ENCODE measurements at regions of chr13 and their contacts with region 1.

Region 1: GRCh38 chr13:25375727-25376358 is 4.1 kb downstream of the ATP8A2 start:
- DNase-seq: peak; percentile 22
- H3K4me3 ChIP-seq: no peak overlapping the region
- H3K27ac ChIP-seq: no peak overlapping the region
- H3K4me1 ChIP-seq: no peaks in the 10 kb centered on the region
- H3K27me3 ChIP-seq: peaks cover 34% of the 10 kb centered on the region
- CTCF ChIP-seq: peak; percentile 48

Region 2: GRCh38 chr13:25085125-25085742 is 290.6 kb before region 1 on chr13:
- intact Hi-C with region 1: loop called (anchors 10 kb)
- DNase-seq: peak; percentile 32
- H3K4me3 ChIP-seq: no peak overlapping the region
- H3K27ac ChIP-seq: no peak overlapping the region
- H3K4me1 ChIP-seq: no peaks in the 10 kb centered on the region
- H3K27me3 ChIP-seq: no peaks in the 10 kb centered on the region
- CTCF ChIP-seq: peak; percentile 36

Region 3: GRCh38 chr13:25232937-25233515 is 142.8 kb before region 1 on chr13:
- intact Hi-C with region 1: loop called (anchors 5 kb)
- DNase-seq: no peak
- H3K4me3 ChIP-seq: no peak overlapping the region
- H3K27ac ChIP-seq: no peak overlapping the region
- H3K4me1 ChIP-seq: no peaks in the 10 kb centered on the region
- H3K27me3 ChIP-seq: no peaks in the 10 kb centered on the region
- CTCF ChIP-seq: peak; percentile 48

Measured in colonic mucosa (tissue), 4 donors.